Right lobe of liver (tissue), 6 donors: ENCODE measurements at regions of chr19 and their contacts with region 1.

Region 1: GRCh38 chr19:44903602-44904425 is 1.8 kb upstream of the APOE start:
- DNase-seq: peak; percentile 75 to 93 (median 88)
- ATAC-seq: peak; percentile 65 to 71 (median 68)
- H3K4me3 ChIP-seq: peak overlapping the region in 2 of 3 donors; percentile 83 to 84
- H3K27ac ChIP-seq: peak overlapping the region; percentile 50 to 78 (median 75)
- H3K4me1 ChIP-seq: peaks cover 0 to 41% (median 0%) of the 10 kb centered on the region in 4 donors
- H3K27me3 ChIP-seq: no peaks in the 10 kb centered on the region
- CTCF ChIP-seq: peak; percentile 99 to 100 (median 99)
- POLR2A ChIP-seq: no peak

Region 2: GRCh38 chr19:44741841-44742352 is 161.9 kb before region 1 on chr19:
- intact Hi-C with region 1: no loop called
- DNase-seq: peak; percentile 99
- ATAC-seq: peak; percentile 60 to 88 (median 76)
- H3K4me3 ChIP-seq: no peak overlapping the region
- H3K27ac ChIP-seq: peak overlapping the region; percentile 75 to 92 (median 85)
- H3K4me1 ChIP-seq: peaks cover 2 to 85% (median 47%) of the 10 kb centered on the region in 4 donors
- H3K27me3 ChIP-seq: no peaks in the 10 kb centered on the region
- CTCF ChIP-seq: no peak
- POLR2A ChIP-seq: peak; percentile 60

Region 3: DNA sequence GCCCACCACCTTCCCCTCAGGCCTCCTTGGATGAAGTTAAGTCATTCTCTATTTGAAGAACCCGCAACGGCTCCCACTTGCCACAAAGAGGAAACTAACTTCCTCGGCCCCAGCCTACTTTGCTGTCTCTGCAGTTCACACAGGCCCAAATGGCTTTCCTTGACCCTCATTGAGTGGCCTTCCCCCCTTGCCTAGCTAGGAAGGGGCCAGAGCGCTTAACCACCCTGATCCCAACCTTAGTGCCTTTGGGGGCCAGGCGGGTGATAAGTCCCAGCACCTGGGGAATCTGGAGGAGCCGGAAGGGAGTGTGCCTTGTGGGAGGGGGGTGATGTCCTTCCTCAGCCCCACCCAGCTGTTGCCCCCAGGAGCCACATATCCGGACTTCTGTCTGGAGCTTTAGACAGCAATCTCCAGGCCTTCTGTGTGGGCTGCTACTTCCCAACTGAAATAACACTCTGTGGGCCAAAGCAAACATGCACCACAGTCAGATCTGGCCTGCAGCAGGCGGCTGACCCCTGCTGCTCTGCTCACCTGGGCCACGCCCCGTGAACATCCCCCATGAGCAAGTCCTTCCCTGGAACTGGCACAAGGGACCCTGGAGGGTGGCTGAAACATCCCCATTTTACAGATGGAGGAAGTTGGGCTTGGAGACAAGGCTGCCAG is 47.3 kb before region 1 on chr19:
- intact Hi-C with region 1: no loop called
- DNase-seq: peak; percentile 68 to 84 (median 78)
- ATAC-seq: peak; percentile 70 to 78 (median 74)
- H3K4me3 ChIP-seq: no peak overlapping the region
- H3K27ac ChIP-seq: peak overlapping the region in 2 of 3 donors; percentile 47 to 75
- H3K4me1 ChIP-seq: peaks cover 0 to 72% (median 25%) of the 10 kb centered on the region in 4 donors
- H3K27me3 ChIP-seq: no peaks in the 10 kb centered on the region
- CTCF ChIP-seq: no peak
- POLR2A ChIP-seq: peak; percentile 18

Region 4: DNA sequence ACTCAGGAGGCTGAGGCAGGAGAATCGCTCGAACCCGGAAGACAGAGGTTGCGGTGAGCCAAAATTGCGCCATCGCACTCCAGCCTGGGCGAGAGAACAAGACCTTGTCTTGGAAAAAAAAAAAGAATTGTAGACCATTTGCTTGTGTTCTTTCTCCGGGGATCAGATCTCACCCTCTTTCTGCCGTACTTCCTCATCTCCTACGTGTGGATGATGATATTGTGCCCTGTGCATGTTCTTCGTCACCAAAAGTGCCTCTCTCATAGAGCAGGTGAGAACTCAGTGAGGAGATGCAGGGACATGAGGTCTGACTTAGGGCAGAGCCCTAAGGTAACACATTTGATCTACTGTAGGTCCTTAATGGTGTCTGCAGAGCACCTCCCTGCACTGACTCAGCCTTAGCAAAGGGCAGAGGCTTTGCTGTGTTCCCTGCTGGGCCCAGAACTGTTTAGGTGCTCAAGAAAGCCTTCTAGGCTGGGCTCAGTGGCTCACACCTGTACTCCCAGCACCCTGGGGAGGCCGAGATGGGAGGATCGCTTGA is 43.3 kb after region 1 on chr19:
- intact Hi-C with region 1: loop called (anchors 5 kb)
- DNase-seq: no peak
- ATAC-seq: no peak
- H3K4me3 ChIP-seq: peak overlapping the region; percentile 44 to 85 (median 78)
- H3K27ac ChIP-seq: peak overlapping the region; percentile 66 to 96 (median 91)
- H3K4me1 ChIP-seq: peaks cover 0 to 30% (median 4%) of the 10 kb centered on the region in 4 donors
- H3K27me3 ChIP-seq: no peaks in the 10 kb centered on the region
- CTCF ChIP-seq: no peak
- POLR2A ChIP-seq: no peak

Region 5: GRCh38 chr19:44954824-44955586 is 51.2 kb after region 1 on chr19 and contains the start of gene CLPTM1:
- intact Hi-C with region 1: loop called in 1 of 2 experiments (anchors 5 kb)
- DNase-seq: peak; percentile 98
- ATAC-seq: peak; percentile 79 to 87 (median 87)
- H3K4me3 ChIP-seq: peak within 1 kb of the TSS; percentile 96 to 100 (median 99)
- H3K27ac ChIP-seq: peak within 1 kb of the TSS; percentile 64 to 93 (median 81)
- H3K4me1 ChIP-seq: peaks cover 0 to 45% (median 10%) of the 10 kb centered on the region in 4 donors
- H3K27me3 ChIP-seq: no peaks in the 10 kb centered on the region
- CTCF ChIP-seq: peak in 1 of 4 donors; percentile 45
- POLR2A ChIP-seq: peak; percentile 55
- total RNA-seq, gene CLPTM1: 78.7 to 90.6 (median 83.9) TPM